KBM-7 (cell line): ENCODE measurements at regions of chr17 and their contacts with region 1.

Region 1: DNA sequence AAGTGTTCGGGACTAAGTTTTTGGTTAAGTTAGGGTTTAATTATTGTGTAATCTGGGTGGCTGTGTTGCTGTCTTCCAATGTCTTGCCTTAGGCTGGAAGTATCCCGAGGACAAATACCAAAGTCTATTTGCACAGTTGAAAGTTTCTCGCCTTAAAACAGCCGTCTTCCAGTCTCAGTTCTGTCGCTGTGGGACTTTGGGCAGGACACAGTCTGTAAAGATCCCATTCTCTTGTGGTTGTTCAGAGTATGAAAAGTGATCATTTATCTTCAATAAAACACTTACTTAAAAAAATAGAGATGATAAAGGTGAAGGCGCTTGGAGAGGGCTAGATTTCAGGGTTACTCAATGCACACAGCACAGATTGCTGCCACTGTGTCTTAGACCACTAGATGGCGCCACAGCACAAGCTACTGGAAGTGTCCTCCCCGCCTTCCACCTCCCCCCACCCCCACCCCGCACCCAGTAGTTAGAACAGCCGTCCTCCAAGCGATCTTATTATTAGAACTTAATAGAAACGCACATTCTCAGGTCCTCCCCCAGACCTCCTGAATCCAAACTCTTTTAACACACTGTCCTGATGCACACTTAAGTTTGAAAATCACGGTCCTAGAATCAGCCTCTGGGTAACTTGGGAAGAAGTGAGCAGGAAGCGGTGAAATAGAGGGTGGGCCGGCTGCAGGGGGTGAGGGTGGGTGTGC is 45.9 kb downstream of the AKAP1 start:
- DNase-seq: peak; percentile 70

Region 2: GRCh38 chr17:57243171-57243948 is 112.4 kb after region 1 on chr17:
- in situ Hi-C with region 1: loop called (anchors 25 kb)
- DNase-seq: peak; percentile 82

Region 3: GRCh38 chr17:57747221-57748017 is 616.5 kb after region 1 on chr17:
- in situ Hi-C with region 1: loop called (anchors 25 kb)
- DNase-seq: peak; percentile 70

Region 4: DNA sequence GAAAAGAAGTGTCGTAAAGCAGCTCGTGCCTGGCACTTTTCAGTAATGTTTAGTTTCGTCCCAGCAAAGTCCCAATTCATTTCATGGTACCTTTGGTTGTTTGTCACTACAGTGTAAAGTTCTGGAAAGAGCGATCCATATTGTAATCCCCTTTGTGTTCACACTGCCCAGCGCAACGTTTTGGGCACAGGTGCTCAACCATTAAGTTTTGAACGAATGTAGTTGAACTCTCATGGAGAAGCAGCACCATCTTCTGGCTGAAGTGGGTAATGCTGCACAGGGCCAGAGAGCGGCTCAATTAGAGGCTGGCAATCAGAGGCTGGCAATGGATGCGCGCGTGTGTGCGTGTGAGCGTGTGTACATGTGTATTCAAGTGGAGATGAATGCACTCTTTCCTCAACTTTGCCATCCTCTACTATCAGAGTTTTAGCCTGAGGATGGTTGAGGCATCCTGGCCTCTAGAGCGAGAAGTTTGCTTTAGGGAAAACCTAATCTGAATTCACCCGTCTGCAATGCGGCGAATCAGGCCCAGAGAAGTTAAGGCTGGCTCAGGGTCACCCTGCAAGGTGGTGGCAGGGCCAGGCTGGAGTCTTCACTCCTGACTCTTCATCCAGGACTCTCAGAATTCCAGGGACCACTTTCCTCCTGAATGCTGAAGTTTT is 982.2 kb after region 1 on chr17:
- in situ Hi-C with region 1: loop called (anchors 25 kb)
- DNase-seq: peak; percentile 79